Astrocyte of the cerebellum (primary cell): ENCODE measurements at regions of chr16 and their contacts with region 1.

Region 1: DNA sequence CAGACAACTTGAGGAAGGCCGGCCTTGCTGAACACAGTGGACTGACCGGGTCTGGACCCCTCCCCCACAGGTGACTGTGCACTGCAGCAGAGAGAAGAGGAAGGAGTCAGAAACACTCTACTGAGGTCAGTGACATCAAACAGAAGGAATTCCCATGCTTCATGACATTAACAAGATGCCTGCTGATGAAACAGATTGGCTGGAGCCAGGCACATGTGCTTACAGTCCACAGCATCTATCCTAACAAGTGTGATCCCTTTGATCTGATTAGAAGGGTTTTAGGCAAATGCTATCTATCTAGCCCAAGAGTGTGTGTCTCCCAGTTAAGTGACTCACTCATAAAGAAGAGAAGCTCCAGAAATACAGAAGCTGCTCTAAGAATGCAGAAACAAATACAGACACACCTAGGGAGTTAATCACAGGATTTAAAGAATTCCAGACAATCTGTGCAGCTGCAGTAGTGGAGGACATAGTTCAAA is 90.2 kb downstream of the SYCE1L start:
- DNase-seq: peak; percentile 4
- H3K4me3 ChIP-seq: no peak overlapping the region
- CTCF ChIP-seq: no peak

Region 2: GRCh38 chr16:77190478-77191258 is 98.7 kb before region 1 on chr16 and contains the start of gene MON1B:
- in situ Hi-C with region 1: no loop called
- DNase-seq: peak; percentile 97
- H3K4me3 ChIP-seq: peak within 1 kb of the TSS; percentile 94
- CTCF ChIP-seq: no peak

Region 3: DNA sequence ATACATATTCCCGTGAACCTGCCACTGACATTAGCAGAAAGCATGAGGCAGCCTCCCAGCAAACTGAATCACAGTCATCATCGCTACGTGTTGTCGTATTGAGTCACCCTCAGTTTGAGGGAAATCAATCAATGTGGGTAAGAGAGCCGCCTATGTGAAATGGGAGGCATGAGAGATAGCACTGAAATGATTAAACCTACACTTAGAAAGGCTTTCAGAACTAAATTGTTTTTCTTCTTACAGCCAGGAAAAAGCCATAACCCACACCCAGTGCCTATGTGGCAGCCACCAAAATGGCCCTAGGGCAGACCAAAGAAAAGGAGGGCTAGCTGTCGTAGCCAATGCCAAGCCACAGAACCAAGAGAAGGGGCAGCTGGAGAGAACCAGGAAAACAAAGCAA is 55.0 kb after region 1 on chr16:
- in situ Hi-C with region 1: loop called (anchors 5 kb)
- DNase-seq: peak; percentile 20
- H3K4me3 ChIP-seq: no peak overlapping the region
- CTCF ChIP-seq: no peak